ENCODE measurements at regions of chr4 and their contacts with region 1.

Region 1: GRCh38 chr4:20422398-20422797 is 170.7 kb downstream of the SLIT2 start:
- DNase-seq: peak; percentile 60
- H3K4me3 ChIP-seq: no peak overlapping the region
- H3K27ac ChIP-seq: no peak overlapping the region
- H3K4me1 ChIP-seq: no peaks in the 10 kb centered on the region
- H3K27me3 ChIP-seq: no peaks in the 10 kb centered on the region
- CTCF ChIP-seq: peak; percentile 54 to 70 (median 62)
- EP300 ChIP-seq: no peak
- POLR2A ChIP-seq: no peak

Region 2: DNA sequence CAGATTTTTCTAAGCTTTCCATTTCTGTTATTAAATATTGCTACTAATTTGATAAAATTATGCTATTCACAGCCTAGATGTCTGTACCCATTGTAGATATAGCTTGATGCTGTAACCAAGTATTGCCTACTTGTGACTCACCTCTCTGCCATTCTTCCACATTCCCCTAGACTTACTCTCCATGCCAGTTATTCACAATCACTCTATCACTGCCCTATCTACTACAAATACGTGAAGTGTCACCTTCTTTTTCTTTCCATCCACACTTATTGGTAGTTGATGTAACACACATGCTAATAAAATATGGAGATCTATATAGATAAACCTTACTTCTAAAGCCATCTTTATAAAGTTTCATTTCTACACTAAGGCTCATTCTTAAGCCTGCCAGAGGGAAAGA is 98.5 kb after region 1 on chr4:
- in situ Hi-C with region 1: no loop called
- intact Hi-C with region 1: no loop called
- DNase-seq: no peak
- H3K4me3 ChIP-seq: no peak overlapping the region
- H3K27ac ChIP-seq: no peak overlapping the region
- H3K4me1 ChIP-seq: no peaks in the 10 kb centered on the region
- H3K27me3 ChIP-seq: no peaks in the 10 kb centered on the region
- CTCF ChIP-seq: no peak
- EP300 ChIP-seq: no peak
- POLR2A ChIP-seq: no peak

Region 3: GRCh38 chr4:20544645-20545044 is 122.2 kb after region 1 on chr4:
- in situ Hi-C with region 1: loop called (anchors 10 kb)
- intact Hi-C with region 1: no loop called
- DNase-seq: no peak
- H3K4me3 ChIP-seq: no peak overlapping the region
- H3K27ac ChIP-seq: no peak overlapping the region
- H3K4me1 ChIP-seq: no peaks in the 10 kb centered on the region
- H3K27me3 ChIP-seq: no peaks in the 10 kb centered on the region
- CTCF ChIP-seq: peak; percentile 55 to 69 (median 56)
- EP300 ChIP-seq: no peak
- POLR2A ChIP-seq: no peak

Region 4: GRCh38 chr4:20684852-20685763 is 262.7 kb after region 1 on chr4:
- in situ Hi-C with region 1: loop called (anchors 5 to 10 kb)
- intact Hi-C with region 1: loop called (anchors 10 kb)
- DNase-seq: no peak
- H3K4me3 ChIP-seq: no peak overlapping the region
- H3K27ac ChIP-seq: no peak overlapping the region
- H3K4me1 ChIP-seq: peaks cover 0 to 7% (median 2%) of the 10 kb centered on the region in 4 donors
- H3K27me3 ChIP-seq: no peaks in the 10 kb centered on the region
- CTCF ChIP-seq: peak; percentile 59 to 70 (median 68)
- EP300 ChIP-seq: no peak
- POLR2A ChIP-seq: no peak

Region 5: DNA sequence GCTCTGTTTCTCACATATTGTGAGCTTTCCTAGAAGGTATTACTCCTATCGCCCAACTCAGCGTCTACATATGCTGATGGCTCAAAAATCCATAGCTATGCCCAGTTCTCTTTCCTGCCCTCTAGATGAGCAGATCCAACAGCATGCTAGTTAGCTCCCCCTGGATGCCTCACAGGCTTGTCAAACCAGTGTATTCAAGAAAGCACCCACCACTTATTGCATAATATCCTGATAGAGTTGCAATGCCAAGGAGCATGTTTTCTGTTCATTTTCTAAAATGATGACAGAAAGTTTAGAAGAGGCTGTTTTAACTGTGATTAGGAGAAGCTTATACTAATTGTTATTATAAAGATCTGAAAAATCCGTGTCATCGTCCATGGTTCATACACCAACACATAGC is 276.0 kb after region 1 on chr4:
- in situ Hi-C with region 1: no loop called
- intact Hi-C with region 1: loop called (anchors 10 kb)
- DNase-seq: no peak
- H3K4me3 ChIP-seq: no peak overlapping the region
- H3K27ac ChIP-seq: no peak overlapping the region
- H3K4me1 ChIP-seq: peaks cover 6 to 19% (median 14%) of the 10 kb centered on the region in 4 donors
- H3K27me3 ChIP-seq: no peaks in the 10 kb centered on the region
- CTCF ChIP-seq: no peak
- EP300 ChIP-seq: no peak
- POLR2A ChIP-seq: no peak